ENCODE measurements at regions of chr16 and their contacts with region 1.

Region 1: DNA sequence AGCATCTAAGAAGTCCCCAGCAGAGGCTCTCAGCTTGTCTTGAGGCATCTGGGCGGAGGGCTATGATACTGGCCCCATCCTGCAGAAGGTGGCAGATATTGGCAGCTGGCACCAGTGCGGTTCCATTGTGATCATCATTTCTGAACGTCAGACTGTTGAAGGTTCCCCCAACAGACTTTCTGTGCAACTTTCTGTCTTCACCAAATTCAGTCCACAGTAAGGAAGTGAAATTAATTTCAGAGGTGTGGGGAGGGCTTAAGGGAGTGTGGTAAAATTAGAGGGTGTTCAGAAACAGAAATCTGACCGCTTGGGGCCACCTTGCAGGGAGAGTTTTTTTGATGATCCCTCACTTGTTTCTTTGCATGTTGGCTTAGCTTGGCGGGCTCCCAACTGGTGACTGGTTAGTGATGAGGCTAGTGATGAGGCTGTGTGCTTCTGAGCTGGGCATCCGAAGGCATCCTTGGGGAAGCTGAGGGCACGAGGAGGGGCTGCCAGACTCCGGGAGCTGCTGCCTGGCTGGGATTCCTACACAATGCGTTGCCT is at the start of gene CIITA:
- DNase-seq: peak; percentile 93
- ATAC-seq: peak; percentile 70
- H3K4me3 ChIP-seq: peak within 1 kb of the TSS; percentile 77 to 97 (median 91)
- H3K4me3 Mint-ChIP-seq: peak within 1 kb of the TSS; percentile 100
- H3K27ac ChIP-seq: peak within 1 kb of the TSS; percentile 86 to 88
- H3K27ac Mint-ChIP-seq: peak within 1 kb of the TSS; percentile 92
- H3K4me1 ChIP-seq: peaks cover 57 to 73% of the 10 kb centered on the region in 2 donors
- H3K4me1 Mint-ChIP-seq: peaks cover 61% of the 10 kb centered on the region
- H3K27me3 ChIP-seq: no peaks in the 10 kb centered on the region
- H3K27me3 Mint-ChIP-seq: no peaks in the 10 kb centered on the region
- CTCF ChIP-seq: no peak
- total RNA-seq, gene CIITA: 719 and 738 TPM in 2 replicates

Region 2: DNA sequence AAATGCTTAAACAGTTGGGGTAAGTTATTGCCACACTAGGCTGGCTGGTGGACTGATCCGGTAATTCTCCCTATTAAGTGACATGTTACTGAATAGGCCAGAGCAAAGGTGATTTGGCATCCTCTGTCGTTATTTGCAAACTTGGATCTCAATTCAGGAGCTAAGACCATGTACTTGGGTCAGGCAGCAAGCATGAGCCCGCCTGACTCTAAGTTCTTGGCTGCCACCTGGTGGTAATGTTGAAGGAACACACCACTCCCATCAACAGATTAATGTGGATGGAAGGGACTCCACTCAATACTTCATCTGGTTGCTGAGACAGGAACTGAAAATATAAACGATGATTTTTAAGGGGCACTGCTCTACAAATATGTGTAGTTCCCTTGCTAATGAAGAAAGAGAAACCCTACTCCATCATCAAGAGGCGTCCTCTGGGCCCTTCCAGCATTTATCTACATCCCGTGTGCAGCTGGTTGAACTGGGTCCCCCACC is 367.3 kb before region 1 on chr16:
- CTCF ChIA-PET with region 1: interaction called, 21 read pairs
- POLR2A ChIA-PET with region 1: interaction called, 3 read pairs
- intact Hi-C with region 1: no loop called
- DNase-seq: peak; percentile 87
- ATAC-seq: peak; percentile 95
- H3K4me3 ChIP-seq: no peak overlapping the region
- H3K4me3 Mint-ChIP-seq: no peak overlapping the region
- H3K27ac ChIP-seq: no peak overlapping the region
- H3K27ac Mint-ChIP-seq: peak overlapping the region; percentile 75
- H3K4me1 ChIP-seq: peaks cover 4 to 10% of the 10 kb centered on the region in 2 donors
- H3K4me1 Mint-ChIP-seq: peaks cover 16% of the 10 kb centered on the region
- H3K27me3 ChIP-seq: no peaks in the 10 kb centered on the region
- H3K27me3 Mint-ChIP-seq: no peaks in the 10 kb centered on the region
- CTCF ChIP-seq: peak; percentile 84

Region 3: GRCh38 chr16:10616730-10617555 is 259.9 kb before region 1 on chr16:
- CTCF ChIA-PET with region 1: no interaction called
- POLR2A ChIA-PET with region 1: no interaction called
- intact Hi-C with region 1: no loop called
- DNase-seq: no peak
- ATAC-seq: no peak
- H3K4me3 ChIP-seq: no peak overlapping the region
- H3K4me3 Mint-ChIP-seq: no peak overlapping the region
- H3K27ac ChIP-seq: no peak overlapping the region
- H3K27ac Mint-ChIP-seq: no peak overlapping the region
- H3K4me1 ChIP-seq: peaks cover 23 to 34% of the 10 kb centered on the region in 2 donors
- H3K4me1 Mint-ChIP-seq: peaks cover 20% of the 10 kb centered on the region
- H3K27me3 ChIP-seq: peaks cover 0 to 21% (median 3%) of the 10 kb centered on the region in 4 experiments
- H3K27me3 Mint-ChIP-seq: peaks cover 29% of the 10 kb centered on the region
- CTCF ChIP-seq: no peak

Region 4: GRCh38 chr16:10743610-10744393 is 133.1 kb before region 1 on chr16 and contains the start of gene NUBP1:
- CTCF ChIA-PET with region 1: interaction called, 21 read pairs
- POLR2A ChIA-PET with region 1: interaction called, 38 read pairs
- intact Hi-C with region 1: loop called (anchors 1 kb)
- DNase-seq: peak; percentile 100
- ATAC-seq: peak; percentile 93
- H3K4me3 ChIP-seq: peak within 1 kb of the TSS; percentile 61 to 85 (median 73)
- H3K4me3 Mint-ChIP-seq: peak within 1 kb of the TSS; percentile 93
- H3K27ac ChIP-seq: peak within 1 kb of the TSS; percentile 93 to 97
- H3K27ac Mint-ChIP-seq: peak within 1 kb of the TSS; percentile 97
- H3K4me1 ChIP-seq: peaks cover 31 to 37% of the 10 kb centered on the region in 2 donors
- H3K4me1 Mint-ChIP-seq: peaks cover 55% of the 10 kb centered on the region
- H3K27me3 ChIP-seq: no peaks in the 10 kb centered on the region
- H3K27me3 Mint-ChIP-seq: no peaks in the 10 kb centered on the region
- CTCF ChIP-seq: no peak
- total RNA-seq, gene NUBP1: 54.3 and 67.3 TPM in 2 replicates

Region 5: DNA sequence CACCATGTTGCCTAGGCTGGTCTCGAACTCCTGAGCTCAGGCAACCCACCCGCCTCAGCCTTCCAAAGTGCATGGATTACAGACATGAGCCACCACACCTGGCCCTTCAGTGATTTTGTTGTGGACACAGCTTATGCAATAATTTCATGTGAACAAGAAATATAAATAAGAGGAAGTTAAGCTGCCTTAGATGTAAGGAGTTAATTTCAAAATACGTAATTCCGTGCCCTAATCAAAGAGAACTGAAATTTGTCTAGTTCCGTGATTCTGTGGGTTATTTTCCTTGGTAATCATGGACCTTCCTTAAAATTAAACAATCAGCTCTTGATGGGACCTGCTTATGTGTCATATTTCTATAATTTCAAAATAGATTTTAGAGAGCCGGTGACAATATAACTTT is 70.2 kb before region 1 on chr16:
- CTCF ChIA-PET with region 1: interaction called, 11 read pairs
- POLR2A ChIA-PET with region 1: no interaction called
- intact Hi-C with region 1: loop called (anchors 2 kb)
- DNase-seq: peak; percentile 44
- ATAC-seq: peak; percentile 37
- H3K4me3 ChIP-seq: no peak overlapping the region
- H3K4me3 Mint-ChIP-seq: peak overlapping the region; percentile 74
- H3K27ac ChIP-seq: no peak overlapping the region
- H3K27ac Mint-ChIP-seq: peak overlapping the region; percentile 84
- H3K4me1 ChIP-seq: peaks cover 8 to 45% of the 10 kb centered on the region in 2 donors
- H3K4me1 Mint-ChIP-seq: peaks cover 64% of the 10 kb centered on the region
- H3K27me3 ChIP-seq: no peaks in the 10 kb centered on the region
- H3K27me3 Mint-ChIP-seq: no peaks in the 10 kb centered on the region
- CTCF ChIP-seq: no peak

Region 6: DNA sequence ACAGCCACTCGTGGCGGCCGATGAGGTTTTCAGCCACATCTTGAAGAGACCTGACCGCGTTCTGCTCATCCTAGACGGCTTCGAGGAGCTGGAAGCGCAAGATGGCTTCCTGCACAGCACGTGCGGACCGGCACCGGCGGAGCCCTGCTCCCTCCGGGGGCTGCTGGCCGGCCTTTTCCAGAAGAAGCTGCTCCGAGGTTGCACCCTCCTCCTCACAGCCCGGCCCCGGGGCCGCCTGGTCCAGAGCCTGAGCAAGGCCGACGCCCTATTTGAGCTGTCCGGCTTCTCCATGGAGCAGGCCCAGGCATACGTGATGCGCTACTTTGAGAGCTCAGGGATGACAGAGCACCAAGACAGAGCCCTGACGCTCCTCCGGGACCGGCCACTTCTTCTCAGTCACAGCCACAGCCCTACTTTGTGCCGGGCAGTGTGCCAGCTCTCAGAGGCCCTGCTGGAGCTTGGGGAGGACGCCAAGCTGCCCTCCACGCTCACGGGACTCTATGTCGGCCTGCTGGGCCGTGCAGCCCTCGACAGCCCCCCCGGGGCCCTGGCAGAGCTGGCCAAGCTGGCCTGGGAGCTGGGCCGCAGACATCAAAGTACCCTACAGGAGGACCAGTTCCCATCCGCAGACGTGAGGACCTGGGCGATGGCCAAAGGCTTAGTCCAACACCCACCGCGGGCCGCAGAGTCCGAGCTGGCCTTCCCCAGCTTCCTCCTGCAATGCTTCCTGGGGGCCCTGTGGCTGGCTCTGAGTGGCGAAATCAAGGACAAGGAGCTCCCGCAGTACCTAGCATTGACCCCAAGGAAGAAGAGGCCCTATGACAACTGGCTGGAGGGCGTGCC is 30.3 kb after region 1 on chr16:
- CTCF ChIA-PET with region 1: interaction called, 58 read pairs
- POLR2A ChIA-PET with region 1: interaction called, 59 read pairs
- intact Hi-C with region 1: loop called (anchors 1 kb)
- DNase-seq: no peak
- ATAC-seq: no peak
- H3K4me3 ChIP-seq: no peak overlapping the region
- H3K4me3 Mint-ChIP-seq: no peak overlapping the region
- H3K27ac ChIP-seq: peak overlapping the region in 1 of 2 donors; percentile 95
- H3K27ac Mint-ChIP-seq: peak overlapping the region; percentile 67
- H3K4me1 ChIP-seq: peaks cover 43 to 55% of the 10 kb centered on the region in 2 donors
- H3K4me1 Mint-ChIP-seq: peaks cover 70% of the 10 kb centered on the region
- H3K27me3 ChIP-seq: no peaks in the 10 kb centered on the region
- H3K27me3 Mint-ChIP-seq: no peaks in the 10 kb centered on the region
- CTCF ChIP-seq: no peak

Region 7: DNA sequence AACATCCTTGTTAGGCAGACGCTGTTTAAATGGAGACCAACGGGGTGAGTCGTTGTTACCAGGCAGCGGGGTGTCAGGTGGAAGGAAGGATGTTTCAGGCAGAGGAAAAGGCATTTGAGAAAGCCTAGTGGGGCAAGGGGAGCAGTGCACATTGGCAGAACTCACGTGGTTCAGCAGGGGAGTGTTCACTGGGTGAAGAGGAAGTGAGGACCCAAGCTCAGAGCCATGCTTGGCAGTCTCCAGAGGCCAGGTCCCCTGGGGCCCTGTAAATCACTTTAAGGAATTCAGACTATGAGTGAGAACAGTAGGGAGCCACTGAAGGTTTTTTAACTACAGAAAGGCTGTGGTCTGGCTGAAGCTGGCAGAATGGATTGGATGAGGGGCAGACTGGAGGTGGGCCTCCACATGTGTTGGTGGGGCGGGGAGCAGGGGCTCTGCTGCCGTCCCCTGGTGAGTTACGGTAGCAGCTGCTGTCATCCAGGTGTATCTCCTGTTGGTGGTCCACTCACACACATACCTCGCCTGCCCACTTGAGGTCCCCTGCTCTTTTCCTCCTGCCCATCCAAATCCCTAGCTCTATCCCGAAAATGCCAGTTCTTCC is 72.6 kb after region 1 on chr16:
- CTCF ChIA-PET with region 1: interaction called, 4 read pairs
- POLR2A ChIA-PET with region 1: interaction called, 9 read pairs
- intact Hi-C with region 1: loop called (anchors 2 kb)
- DNase-seq: peak; percentile 91
- ATAC-seq: peak; percentile 91
- H3K4me3 ChIP-seq: peak overlapping the region in 2 of 5 experiments; percentile 8 to 14
- H3K4me3 Mint-ChIP-seq: peak overlapping the region; percentile 80
- H3K27ac ChIP-seq: peak overlapping the region; percentile 67 to 78
- H3K27ac Mint-ChIP-seq: peak overlapping the region; percentile 96
- H3K4me1 ChIP-seq: peaks cover 52 to 63% of the 10 kb centered on the region in 2 donors
- H3K4me1 Mint-ChIP-seq: peaks cover 75% of the 10 kb centered on the region
- H3K27me3 ChIP-seq: no peaks in the 10 kb centered on the region
- H3K27me3 Mint-ChIP-seq: no peaks in the 10 kb centered on the region
- CTCF ChIP-seq: peak; percentile 59